Dendritic cell treated with granulocyte-macrophage colony-stimulating factor and Interleukin-4, amounts not matched to agents 40 ng/mL and 50 ng/mL, for 4 days (primary cell): ENCODE measurements at regions of chr19 and their contacts with region 1.

Region 1: DNA sequence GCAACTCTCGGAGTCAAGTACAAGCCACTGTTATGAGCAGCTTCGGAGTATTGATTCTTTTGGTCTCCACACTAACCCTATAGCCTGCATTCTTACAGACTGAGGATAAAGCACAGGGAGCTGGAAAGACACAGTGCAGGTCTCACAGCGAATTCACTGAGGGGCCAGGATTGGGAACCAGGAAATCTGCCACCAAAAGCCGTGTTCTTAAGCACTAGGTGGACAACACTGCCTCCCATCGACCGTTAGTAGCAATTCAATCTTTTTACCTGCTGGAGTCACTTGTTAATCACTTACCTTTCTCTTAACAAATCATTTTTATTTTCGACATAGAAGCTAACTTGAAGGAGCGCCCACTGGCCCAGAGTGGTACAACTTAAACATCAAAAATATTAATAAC is 6.3 kb downstream of the PMIS2 start:
- H3K4me3 Mint-ChIP-seq: no peak overlapping the region
- H3K27ac Mint-ChIP-seq: no peak overlapping the region
- H3K4me1 Mint-ChIP-seq: peaks cover 6% of the 10 kb centered on the region
- H3K27me3 Mint-ChIP-seq: peaks cover 9% of the 10 kb centered on the region

Region 2: DNA sequence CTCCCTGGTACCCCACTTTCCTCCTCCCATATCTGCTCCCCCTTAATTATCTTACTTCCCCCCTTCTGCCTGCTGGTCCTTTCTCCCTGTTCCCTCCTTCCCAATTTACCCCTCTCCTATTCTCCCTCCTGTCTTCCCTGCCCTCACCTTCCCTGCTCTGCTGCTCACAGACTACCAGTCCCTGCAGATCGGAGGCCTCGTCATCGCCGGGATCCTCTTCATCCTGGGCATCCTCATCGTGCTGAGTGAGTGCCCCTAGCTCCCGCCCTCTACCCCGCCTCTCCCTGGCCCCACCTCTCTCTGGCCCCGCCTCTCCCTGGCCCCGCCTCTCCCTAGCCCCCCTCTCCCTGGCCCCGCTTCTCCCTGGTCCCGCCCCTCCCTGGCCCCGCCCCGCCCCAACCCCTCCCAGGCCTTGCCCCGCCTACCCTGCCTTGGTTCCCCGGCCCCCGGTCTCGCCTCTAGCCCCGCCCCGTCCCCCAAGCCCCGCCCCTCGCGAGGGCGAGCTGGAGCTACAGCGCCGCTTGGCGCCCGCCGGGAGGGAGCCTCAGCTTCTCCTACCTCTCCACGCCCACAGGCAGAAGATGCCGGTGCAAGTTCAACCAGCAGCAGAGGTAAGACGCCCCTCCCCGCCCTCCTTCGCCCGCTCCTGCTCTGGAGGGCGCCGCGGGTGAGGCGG is 451.1 kb before region 1 on chr19:
- intact Hi-C with region 1: no loop called
- H3K4me3 Mint-ChIP-seq: peak overlapping the region; percentile 58
- H3K27ac Mint-ChIP-seq: peak overlapping the region; percentile 61
- H3K4me1 Mint-ChIP-seq: peaks cover 45% of the 10 kb centered on the region
- H3K27me3 Mint-ChIP-seq: peaks cover 66% of the 10 kb centered on the region

Region 3: GRCh38 chr19:35352448-35353304 is 239.6 kb before region 1 on chr19:
- intact Hi-C with region 1: loop called (anchors 5 kb)
- H3K4me3 Mint-ChIP-seq: no peak overlapping the region
- H3K27ac Mint-ChIP-seq: no peak overlapping the region
- H3K4me1 Mint-ChIP-seq: peaks cover 51% of the 10 kb centered on the region
- H3K27me3 Mint-ChIP-seq: peaks cover 33% of the 10 kb centered on the region

Region 4: GRCh38 chr19:35468637-35469036 is 123.6 kb before region 1 on chr19:
- intact Hi-C with region 1: no loop called
- H3K4me3 Mint-ChIP-seq: no peak overlapping the region
- H3K27ac Mint-ChIP-seq: no peak overlapping the region
- H3K4me1 Mint-ChIP-seq: peaks cover 17% of the 10 kb centered on the region
- H3K27me3 Mint-ChIP-seq: peaks cover 20% of the 10 kb centered on the region

Region 5: GRCh38 chr19:35509861-35510625 is 82.2 kb before region 1 on chr19:
- intact Hi-C with region 1: loop called (anchors 1 kb)
- H3K4me3 Mint-ChIP-seq: no peak overlapping the region
- H3K27ac Mint-ChIP-seq: no peak overlapping the region
- H3K4me1 Mint-ChIP-seq: peaks cover 9% of the 10 kb centered on the region
- H3K27me3 Mint-ChIP-seq: peaks cover 84% of the 10 kb centered on the region

Region 6: GRCh38 chr19:35559281-35559659 is 33.0 kb before region 1 on chr19:
- intact Hi-C with region 1: no loop called
- H3K4me3 Mint-ChIP-seq: no peak overlapping the region
- H3K27ac Mint-ChIP-seq: no peak overlapping the region
- H3K4me1 Mint-ChIP-seq: peaks cover 9% of the 10 kb centered on the region
- H3K27me3 Mint-ChIP-seq: peaks cover 73% of the 10 kb centered on the region

Region 7: GRCh38 chr19:35648017-35648961 is 56.1 kb after region 1 on chr19 and contains the start of gene COX6B1:
- intact Hi-C with region 1: no loop called
- H3K4me3 Mint-ChIP-seq: peak within 1 kb of the TSS; percentile 89
- H3K27ac Mint-ChIP-seq: peak within 1 kb of the TSS; percentile 97
- H3K4me1 Mint-ChIP-seq: peaks cover 55% of the 10 kb centered on the region
- H3K27me3 Mint-ChIP-seq: no peaks in the 10 kb centered on the region